ENCODE measurements at regions of chr2 and their contacts with region 1.

Region 1: GRCh38 chr2:31297751-31298150 is 63.8 kb downstream of the EHD3 start:
- DNase-seq: no peak

Region 2: GRCh38 chr2:31233741-31234682 is 63.7 kb before region 1 on chr2 and contains the start of gene EHD3:
- intact Hi-C with region 1: loop called (anchors 2 kb)
- DNase-seq: peak; percentile 94
- total RNA-seq, gene EHD3: 26.6 TPM

Measured in cardiac septum (tissue), 1 donor.